ENCODE measurements at regions of chr3 and their contacts with region 1.

Region 1: GRCh38 chr3:49171119-49171774 is at the start of gene KLHDC8B:
- DNase-seq: peak; percentile 80 to 93
- H3K4me3 ChIP-seq: peak within 1 kb of the TSS; percentile 53
- H3K4me1 ChIP-seq: peaks cover 19% of the 10 kb centered on the region
- H3K27me3 ChIP-seq: no peaks in the 10 kb centered on the region

Region 2: GRCh38 chr3:49428697-49429100 is 257.5 kb after region 1 on chr3:
- in situ Hi-C with region 1: loop called (anchors 25 kb)
- DNase-seq: no peak
- H3K4me3 ChIP-seq: peak overlapping the region; percentile 58
- H3K4me1 ChIP-seq: peaks cover 2% of the 10 kb centered on the region
- H3K27me3 ChIP-seq: no peaks in the 10 kb centered on the region